ENCODE measurements at regions of chr4 and their contacts with region 1.

Region 1: GRCh38 chr4:182348779-182349326 is 105.7 kb downstream of the TENM3 start:
- DNase-seq: no peak
- H3K4me3 ChIP-seq: no peak overlapping the region
- H3K4me3 Mint-ChIP-seq: no peak overlapping the region
- H3K27ac Mint-ChIP-seq: peak overlapping the region; percentile 78
- H3K4me1 ChIP-seq: peaks cover 37% of the 10 kb centered on the region
- H3K4me1 Mint-ChIP-seq: peaks cover 36% of the 10 kb centered on the region
- H3K27me3 ChIP-seq: no peaks in the 10 kb centered on the region
- H3K27me3 Mint-ChIP-seq: no peaks in the 10 kb centered on the region
- CTCF ChIP-seq: no peak

Region 2: GRCh38 chr4:182448281-182449151 is 99.7 kb after region 1 on chr4:
- CTCF ChIA-PET with region 1: no interaction called
- POLR2A ChIA-PET with region 1: no interaction called
- intact Hi-C with region 1: loop called (anchors 5 kb)
- DNase-seq: peak; percentile 92
- H3K4me3 ChIP-seq: peak overlapping the region; percentile 90
- H3K4me3 Mint-ChIP-seq: peak overlapping the region; percentile 81
- H3K27ac Mint-ChIP-seq: peak overlapping the region; percentile 83
- H3K4me1 ChIP-seq: peaks cover 3% of the 10 kb centered on the region; the same call in 1 of the 2 replicates
- H3K4me1 Mint-ChIP-seq: peaks cover 27% of the 10 kb centered on the region
- H3K27me3 ChIP-seq: no peaks in the 10 kb centered on the region
- H3K27me3 Mint-ChIP-seq: no peaks in the 10 kb centered on the region
- CTCF ChIP-seq: no peak

Region 3: GRCh38 chr4:182507805-182508204 is 159.0 kb after region 1 on chr4:
- CTCF ChIA-PET with region 1: no interaction called
- POLR2A ChIA-PET with region 1: no interaction called
- intact Hi-C with region 1: no loop called
- DNase-seq: no peak
- H3K4me3 ChIP-seq: no peak overlapping the region
- H3K4me3 Mint-ChIP-seq: no peak overlapping the region
- H3K27ac Mint-ChIP-seq: no peak overlapping the region
- H3K4me1 ChIP-seq: no peaks in the 10 kb centered on the region
- H3K4me1 Mint-ChIP-seq: no peaks in the 10 kb centered on the region
- H3K27me3 ChIP-seq: no peaks in the 10 kb centered on the region
- H3K27me3 Mint-ChIP-seq: no peaks in the 10 kb centered on the region
- CTCF ChIP-seq: no peak

Measured in Caco-2 (cell line).